ENCODE measurements at regions of chr20 and their contacts with region 1.

Region 1: DNA sequence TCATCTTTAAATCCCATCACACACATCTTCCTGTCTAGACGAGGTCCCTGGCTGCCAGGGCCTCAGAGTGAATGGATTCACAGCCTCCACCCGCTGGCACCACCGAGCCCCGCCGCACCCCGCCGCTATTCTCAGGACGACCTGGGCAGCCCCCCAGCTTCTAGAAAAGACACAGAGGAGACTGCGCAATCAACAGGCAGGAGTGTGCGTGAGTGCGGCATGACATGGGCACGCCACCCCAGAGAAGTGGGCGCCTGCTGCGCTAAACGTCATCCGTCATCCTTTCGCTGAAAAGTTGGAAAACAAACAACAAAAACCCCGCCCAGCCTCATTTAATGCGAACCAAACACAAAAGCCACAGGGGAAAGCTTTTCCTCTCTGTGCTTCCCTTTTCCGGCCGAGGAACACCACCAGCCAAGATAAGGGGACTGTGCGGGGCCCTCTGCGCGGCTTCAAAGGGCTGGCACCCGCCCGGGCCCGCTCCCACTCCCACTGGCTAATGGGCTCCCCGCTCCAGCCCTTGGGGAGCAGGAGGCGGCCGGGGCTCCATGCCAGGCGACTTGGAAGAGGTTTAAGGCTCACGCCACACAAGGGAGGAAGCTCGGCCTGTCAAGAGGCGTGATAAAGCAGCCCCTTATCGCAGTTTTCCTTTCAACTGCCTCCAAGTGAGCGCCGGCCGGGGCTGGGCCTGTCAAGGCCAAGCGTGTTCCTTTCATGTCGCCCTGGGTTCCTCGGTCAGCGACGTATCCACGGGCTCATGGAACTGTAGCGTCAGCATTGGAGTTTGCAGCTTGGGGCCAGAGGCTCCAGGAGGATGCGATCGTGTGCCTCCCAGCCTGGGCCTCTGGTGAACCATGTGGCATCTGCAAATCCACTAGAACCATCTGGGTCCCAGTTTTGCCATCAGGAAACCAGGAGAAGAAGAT is 50.1 kb downstream of the NFATC2 start:
- DNase-seq: no peak
- ATAC-seq: no peak
- H3K4me3 ChIP-seq: no peak overlapping the region
- H3K4me3 Mint-ChIP-seq: peak overlapping the region; percentile 32
- H3K27ac ChIP-seq: no peak overlapping the region
- H3K27ac Mint-ChIP-seq: no peak overlapping the region
- H3K4me1 ChIP-seq: peaks cover 59 to 66% of the 10 kb centered on the region in 2 donors
- H3K4me1 Mint-ChIP-seq: peaks cover 59% of the 10 kb centered on the region
- H3K27me3 ChIP-seq: no peaks in the 10 kb centered on the region
- H3K27me3 Mint-ChIP-seq: no peaks in the 10 kb centered on the region
- CTCF ChIP-seq: no peak

Region 2: DNA sequence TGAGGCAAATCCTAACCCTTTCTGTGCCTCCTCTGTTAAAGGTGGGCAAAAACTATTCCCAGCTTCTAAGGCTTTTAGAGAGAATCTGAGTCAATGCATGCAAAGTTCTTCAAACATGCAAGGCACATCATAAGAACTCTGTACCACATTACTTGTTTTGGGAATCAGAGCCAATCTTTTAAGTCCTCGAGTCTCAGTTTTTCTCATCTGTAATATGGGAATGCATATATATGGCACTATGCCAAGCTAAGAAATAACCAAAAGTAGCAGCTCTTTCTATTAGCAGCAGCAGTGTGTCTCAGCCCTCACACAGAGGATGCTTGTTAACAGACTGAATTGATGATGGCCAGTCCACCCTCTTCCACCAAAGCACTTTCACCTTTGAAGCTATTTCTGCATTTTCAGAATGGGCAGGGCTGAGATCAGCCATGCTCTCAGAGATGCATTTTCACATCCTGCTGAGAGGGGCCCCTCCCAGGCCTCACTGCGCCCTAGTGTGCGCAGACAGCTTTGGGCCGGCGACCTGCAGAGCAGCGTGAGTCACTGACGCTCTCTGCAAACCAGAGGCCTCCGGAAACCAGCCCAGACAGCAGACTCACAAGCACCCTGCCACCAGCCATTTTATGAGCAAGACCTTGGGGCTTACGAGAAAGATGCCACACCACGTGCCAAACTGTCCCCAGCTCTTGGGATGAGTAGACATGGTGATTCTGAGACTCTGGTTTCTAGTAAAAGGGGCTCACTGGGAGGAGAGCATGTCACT is 88.0 kb before region 1 on chr20:
- CTCF ChIA-PET with region 1: no interaction called
- POLR2A ChIA-PET with region 1: no interaction called
- intact Hi-C with region 1: no loop called
- DNase-seq: peak; percentile 92
- ATAC-seq: peak; percentile 85
- H3K4me3 ChIP-seq: no peak overlapping the region
- H3K4me3 Mint-ChIP-seq: peak overlapping the region; percentile 49
- H3K27ac ChIP-seq: peak overlapping the region; percentile 86 to 97
- H3K27ac Mint-ChIP-seq: peak overlapping the region; percentile 99
- H3K4me1 ChIP-seq: peaks cover 62 to 74% of the 10 kb centered on the region in 2 donors
- H3K4me1 Mint-ChIP-seq: peaks cover 77% of the 10 kb centered on the region
- H3K27me3 ChIP-seq: no peaks in the 10 kb centered on the region
- H3K27me3 Mint-ChIP-seq: no peaks in the 10 kb centered on the region
- CTCF ChIP-seq: no peak

Region 3: GRCh38 chr20:51456511-51457509 is 35.6 kb before region 1 on chr20:
- CTCF ChIA-PET with region 1: no interaction called
- POLR2A ChIA-PET with region 1: no interaction called
- intact Hi-C with region 1: no loop called
- DNase-seq: peak; percentile 34
- ATAC-seq: peak; percentile 31
- H3K4me3 ChIP-seq: peak overlapping the region in 1 of 5 experiments; percentile 36
- H3K4me3 Mint-ChIP-seq: peak overlapping the region; percentile 64
- H3K27ac ChIP-seq: peak overlapping the region in 1 of 2 donors; percentile 12
- H3K27ac Mint-ChIP-seq: peak overlapping the region; percentile 56
- H3K4me1 ChIP-seq: peaks cover 43 to 51% of the 10 kb centered on the region in 2 donors
- H3K4me1 Mint-ChIP-seq: peaks cover 45% of the 10 kb centered on the region
- H3K27me3 ChIP-seq: no peaks in the 10 kb centered on the region
- H3K27me3 Mint-ChIP-seq: no peaks in the 10 kb centered on the region
- CTCF ChIP-seq: no peak

Region 4: GRCh38 chr20:51480507-51481270 is 11.7 kb before region 1 on chr20:
- CTCF ChIA-PET with region 1: interaction called, 4 read pairs
- POLR2A ChIA-PET with region 1: no interaction called
- intact Hi-C with region 1: loop called (anchors 2 kb)
- DNase-seq: peak; percentile 55
- ATAC-seq: peak; percentile 83
- H3K4me3 ChIP-seq: peak overlapping the region in 1 of 5 experiments; percentile 14
- H3K4me3 Mint-ChIP-seq: peak overlapping the region; percentile 40
- H3K27ac ChIP-seq: no peak overlapping the region
- H3K27ac Mint-ChIP-seq: peak overlapping the region; percentile 82
- H3K4me1 ChIP-seq: peaks cover 10 to 19% of the 10 kb centered on the region in 2 donors
- H3K4me1 Mint-ChIP-seq: peaks cover 45% of the 10 kb centered on the region
- H3K27me3 ChIP-seq: no peaks in the 10 kb centered on the region
- H3K27me3 Mint-ChIP-seq: no peaks in the 10 kb centered on the region
- CTCF ChIP-seq: no peak